ENCODE measurements at regions of chr16 and their contacts with region 1.

Region 1: GRCh38 chr16:84511180-84511824 is 6.8 kb upstream of the MEAK7 start:
- DNase-seq: peak; percentile 76 to 85
- ATAC-seq: peak; percentile 88 to 90
- H3K4me3 ChIP-seq: peak overlapping the region; percentile 14; the same call in 1 of the 3 replicates
- H3K27ac ChIP-seq: peak overlapping the region; percentile 36 to 77
- H3K4me1 ChIP-seq: peaks cover 7% of the 10 kb centered on the region
- CTCF ChIP-seq: peak; percentile 87
- EP300 ChIP-seq: no peak
- POLR2A ChIP-seq: no peak
- RAD21 ChIP-seq: peak; percentile 87 to 95

Region 2: DNA sequence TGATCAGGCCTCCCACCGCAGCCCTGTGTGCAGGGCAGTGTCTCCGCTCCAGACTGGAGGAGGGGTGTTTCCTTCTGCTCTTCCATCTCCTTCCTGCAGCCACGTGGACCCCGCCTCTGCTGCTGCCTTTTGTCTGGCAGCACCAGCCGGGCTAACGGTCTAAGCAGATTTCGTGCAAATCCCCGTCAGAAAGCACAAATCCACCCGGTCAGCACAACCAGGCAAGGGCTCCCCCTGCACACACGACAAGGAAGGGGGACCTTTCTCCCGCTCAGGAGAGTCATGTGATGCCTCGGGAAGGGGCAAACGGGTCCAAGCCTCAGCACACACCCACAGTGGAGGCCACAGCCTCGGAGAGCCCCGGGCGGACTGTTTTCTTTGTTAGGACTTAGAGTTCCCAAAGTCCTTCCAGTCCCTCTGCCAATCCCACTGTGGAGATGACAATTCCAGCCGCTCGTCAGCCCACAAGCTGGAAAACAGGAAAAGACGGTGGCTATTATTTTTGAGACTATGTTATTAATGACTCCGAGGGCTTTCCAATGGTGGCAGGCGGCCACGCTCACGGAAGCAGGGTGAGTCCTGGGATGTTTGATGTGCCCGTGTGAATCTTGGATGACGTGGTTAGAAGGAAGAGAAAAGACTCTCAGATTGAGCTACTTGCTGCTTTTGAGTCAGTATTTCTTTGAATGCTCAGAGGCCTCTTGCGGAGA is 15.6 kb after region 1 on chr16:
- CTCF ChIA-PET with region 1: interaction called, 115 read pairs
- POLR2A ChIA-PET with region 1: interaction called, 3 read pairs
- DNase-seq: no peak
- ATAC-seq: no peak
- H3K4me3 ChIP-seq: no peak overlapping the region
- H3K27ac ChIP-seq: 0 out of 6 replicates have a peak overlapping the region, but pooled peaks of 1 of the 2 experiments have one; percentile 12
- H3K4me1 ChIP-seq: peaks cover 7% of the 10 kb centered on the region
- CTCF ChIP-seq: no peak
- EP300 ChIP-seq: no peak
- POLR2A ChIP-seq: no peak
- RAD21 ChIP-seq: no peak

Region 3: DNA sequence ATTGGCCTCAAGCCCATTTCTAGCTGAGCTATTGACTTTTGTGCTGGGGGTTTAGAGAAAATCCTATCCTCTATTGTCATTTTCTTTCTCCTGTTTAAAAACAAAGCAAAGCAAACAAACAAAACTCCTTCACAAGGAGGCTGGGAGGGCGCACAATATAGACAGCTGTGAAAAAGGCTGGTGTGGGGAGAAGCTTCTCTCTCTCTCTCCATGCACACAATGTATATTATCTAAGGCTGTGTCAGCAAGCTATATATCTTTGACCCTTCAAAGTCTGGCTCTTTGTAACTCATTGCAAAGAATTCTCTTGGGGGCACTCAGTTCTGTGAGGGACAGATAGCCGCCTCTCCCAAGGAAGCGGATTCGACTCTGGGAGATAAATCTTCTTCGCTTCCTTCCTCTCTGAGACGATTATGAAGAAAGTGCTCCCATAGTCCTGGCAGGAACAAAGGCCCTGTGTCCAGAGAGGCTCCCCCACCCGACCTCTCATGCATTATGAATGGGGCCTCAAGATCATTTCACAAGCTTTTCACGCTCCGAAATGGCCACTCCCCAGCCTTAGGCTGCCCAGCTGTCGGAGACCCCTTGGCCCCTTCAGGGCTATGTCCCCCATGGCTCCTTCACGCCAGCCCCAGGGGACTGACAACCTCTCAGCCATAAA is 26.3 kb after region 1 on chr16:
- CTCF ChIA-PET with region 1: interaction called, 17 read pairs
- POLR2A ChIA-PET with region 1: no interaction called
- DNase-seq: no peak
- ATAC-seq: no peak
- H3K4me3 ChIP-seq: no peak overlapping the region
- H3K27ac ChIP-seq: no peak overlapping the region
- H3K4me1 ChIP-seq: peaks cover 10% of the 10 kb centered on the region
- CTCF ChIP-seq: no peak
- EP300 ChIP-seq: no peak
- POLR2A ChIP-seq: no peak
- RAD21 ChIP-seq: no peak

Region 4: GRCh38 chr16:84599521-84600202 is 88.4 kb after region 1 on chr16:
- CTCF ChIA-PET with region 1: interaction called, 16 read pairs
- POLR2A ChIA-PET with region 1: no interaction called
- DNase-seq: peak in 1 of 2 experiments; percentile 46
- ATAC-seq: peak in 1 of 2 experiments; percentile 26; a peak in 3 of 6 replicates
- H3K4me3 ChIP-seq: no peak overlapping the region
- H3K27ac ChIP-seq: peak overlapping the region; percentile 84 to 95
- H3K4me1 ChIP-seq: peaks cover 68% of the 10 kb centered on the region
- CTCF ChIP-seq: no peak
- EP300 ChIP-seq: no peak
- POLR2A ChIP-seq: no peak
- RAD21 ChIP-seq: no peak

Region 5: DNA sequence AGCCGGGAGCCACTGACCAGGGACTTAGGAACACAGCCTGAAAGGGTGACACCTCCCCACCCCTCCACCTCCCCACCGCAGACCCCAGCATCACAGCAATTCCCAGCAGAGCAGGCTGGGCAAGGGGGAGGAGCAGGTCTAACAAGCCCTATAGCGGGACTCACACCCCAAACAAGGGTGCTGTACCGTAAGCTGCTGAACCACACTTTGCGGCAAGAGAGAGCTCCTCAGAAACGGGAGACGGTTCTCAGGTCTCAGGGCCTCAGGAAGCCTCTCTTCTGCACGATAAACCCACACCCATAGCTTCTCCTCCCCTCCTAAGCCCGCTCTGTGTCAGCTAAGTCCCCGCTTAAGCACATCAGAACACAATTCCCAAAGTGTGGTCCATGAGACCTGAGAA is 118.3 kb after region 1 on chr16:
- CTCF ChIA-PET with region 1: interaction called, 284 read pairs
- POLR2A ChIA-PET with region 1: no interaction called
- DNase-seq: no peak
- ATAC-seq: peak in 1 of 2 experiments; percentile 22; a peak in 2 of 6 replicates
- H3K4me3 ChIP-seq: no peak overlapping the region
- H3K27ac ChIP-seq: no peak overlapping the region
- H3K4me1 ChIP-seq: no peaks in the 10 kb centered on the region
- CTCF ChIP-seq: no peak
- EP300 ChIP-seq: no peak
- POLR2A ChIP-seq: no peak
- RAD21 ChIP-seq: no peak

Region 6: DNA sequence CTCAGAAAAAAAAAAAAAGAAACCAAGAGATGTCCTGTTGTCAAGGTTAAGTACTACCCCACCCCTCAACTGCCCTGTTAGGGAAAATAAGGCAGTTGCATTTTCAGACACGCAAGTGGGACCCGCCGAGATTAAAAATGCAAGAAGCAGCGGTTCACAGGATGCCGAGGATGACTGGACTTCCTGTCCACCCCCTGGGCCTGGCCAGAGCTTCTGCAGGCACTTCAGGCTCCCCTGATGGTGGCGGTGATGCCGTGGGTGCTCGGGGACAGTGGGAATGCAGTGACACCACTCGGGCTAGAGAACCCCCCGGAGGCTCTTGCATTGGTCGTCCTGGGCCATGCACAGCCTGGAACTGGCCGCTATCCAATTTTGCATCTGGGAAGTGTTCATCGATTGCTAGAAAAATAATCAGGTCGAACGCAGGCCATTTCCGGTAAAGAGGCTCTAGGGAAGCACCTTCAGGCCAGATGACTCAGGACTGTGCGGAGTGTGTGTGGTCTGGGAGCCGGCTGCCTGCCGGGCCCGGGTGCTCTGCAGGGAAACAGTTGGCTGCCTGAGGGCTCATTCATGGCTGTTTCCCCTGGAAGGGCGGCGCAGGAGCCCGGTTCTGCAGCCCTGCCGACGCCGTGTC is 295.1 kb after region 1 on chr16:
- CTCF ChIA-PET with region 1: no interaction called
- POLR2A ChIA-PET with region 1: no interaction called
- DNase-seq: peak; percentile 40 to 52
- ATAC-seq: peak; percentile 80 to 83
- H3K4me3 ChIP-seq: 0 out of 3 replicates have a peak overlapping the region, but pooled peaks have one; percentile 8
- H3K27ac ChIP-seq: peak overlapping the region; percentile 44 to 86
- H3K4me1 ChIP-seq: peaks cover 9% of the 10 kb centered on the region; the same call in 1 of the 3 replicates
- CTCF ChIP-seq: no peak
- EP300 ChIP-seq: no peak
- POLR2A ChIP-seq: no peak
- RAD21 ChIP-seq: no peak

Region 7: GRCh38 chr16:84819644-84820324 is 308.5 kb after region 1 on chr16 and contains the start of gene CRISPLD2:
- CTCF ChIA-PET with region 1: no interaction called
- POLR2A ChIA-PET with region 1: no interaction called
- DNase-seq: peak; percentile 83 to 93
- ATAC-seq: peak; percentile 93 to 99
- H3K4me3 ChIP-seq: peak within 1 kb of the TSS; percentile 44
- H3K27ac ChIP-seq: peak within 1 kb of the TSS in 1 of 2 experiments; percentile 55; a peak in 1 of 6 replicates
- H3K4me1 ChIP-seq: peaks cover 11% of the 10 kb centered on the region; the same call in 2 of the 3 replicates
- CTCF ChIP-seq: no peak
- EP300 ChIP-seq: no peak
- POLR2A ChIP-seq: peak; percentile 95
- RAD21 ChIP-seq: no peak
- polyA plus RNA-seq, gene CRISPLD2: 0.85 and 0.89 TPM in 2 replicates

Region 8: GRCh38 chr16:84952335-84953189 is 441.3 kb after region 1 on chr16:
- CTCF ChIA-PET with region 1: no interaction called
- POLR2A ChIA-PET with region 1: no interaction called
- DNase-seq: peak; percentile 80
- ATAC-seq: peak; percentile 89 to 97
- H3K4me3 ChIP-seq: no peak overlapping the region
- H3K27ac ChIP-seq: no peak overlapping the region
- H3K4me1 ChIP-seq: no peaks in the 10 kb centered on the region
- CTCF ChIP-seq: peak; percentile 78
- EP300 ChIP-seq: no peak
- POLR2A ChIP-seq: no peak
- RAD21 ChIP-seq: peak; percentile 68 to 81

Measured in A549 (cell line).